WTC11 (cell line): ENCODE measurements at regions of chr20 and their contacts with region 1.

Region 1: DNA sequence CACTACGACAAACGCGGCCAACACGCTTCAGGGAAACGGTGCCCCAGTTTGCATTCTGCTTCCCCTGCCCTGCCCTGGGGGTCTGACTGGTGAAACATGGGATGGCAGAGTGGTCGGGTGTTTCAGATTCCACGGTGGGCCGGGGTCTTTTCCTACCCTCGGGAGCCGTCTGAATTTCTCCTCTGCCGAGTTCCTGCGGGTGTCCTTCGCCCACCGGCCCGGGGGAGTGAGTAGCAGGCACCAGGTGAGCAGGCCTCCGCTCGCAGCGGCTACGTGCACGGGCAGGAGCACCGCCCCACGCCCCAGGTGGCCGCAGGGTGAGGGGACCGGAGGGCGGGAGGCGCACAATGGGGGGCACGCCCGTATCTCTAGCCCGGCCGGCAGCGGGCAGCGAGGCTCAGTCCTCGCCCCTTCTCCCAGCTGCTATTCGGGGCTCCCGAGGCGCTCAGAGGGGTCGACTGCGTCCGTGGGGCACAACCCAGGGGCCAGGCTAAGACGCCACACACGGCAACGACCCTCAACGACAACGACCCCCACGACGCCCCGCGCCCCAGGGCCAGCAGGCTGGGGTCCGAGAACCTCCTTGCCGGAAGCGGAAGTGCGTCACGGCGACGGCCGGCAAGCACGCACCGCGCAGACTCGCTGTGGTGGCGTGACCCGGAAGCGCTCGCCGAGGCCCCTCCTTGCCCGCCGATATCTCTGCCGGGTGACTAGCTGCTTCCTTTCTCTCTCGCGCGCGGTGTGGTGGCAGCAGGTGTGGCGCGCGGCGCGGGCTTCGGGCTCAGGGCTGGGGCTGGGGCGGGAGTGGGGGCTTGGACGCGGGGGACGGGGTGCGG is at the start of gene RPS21:
- DNase-seq: peak; percentile 89
- ATAC-seq: peak; percentile 48
- H3K4me3 Mint-ChIP-seq: peak within 1 kb of the TSS; percentile 89
- H3K27ac Mint-ChIP-seq: peak within 1 kb of the TSS; percentile 77
- H3K4me1 Mint-ChIP-seq: peaks cover 30% of the 10 kb centered on the region
- H3K27me3 Mint-ChIP-seq: no peaks in the 10 kb centered on the region
- CTCF ChIP-seq: no peak
- total RNA-seq, gene RPS21: 2,016 to 2,119 TPM (median 2,047 TPM) in 3 replicates

Region 2: DNA sequence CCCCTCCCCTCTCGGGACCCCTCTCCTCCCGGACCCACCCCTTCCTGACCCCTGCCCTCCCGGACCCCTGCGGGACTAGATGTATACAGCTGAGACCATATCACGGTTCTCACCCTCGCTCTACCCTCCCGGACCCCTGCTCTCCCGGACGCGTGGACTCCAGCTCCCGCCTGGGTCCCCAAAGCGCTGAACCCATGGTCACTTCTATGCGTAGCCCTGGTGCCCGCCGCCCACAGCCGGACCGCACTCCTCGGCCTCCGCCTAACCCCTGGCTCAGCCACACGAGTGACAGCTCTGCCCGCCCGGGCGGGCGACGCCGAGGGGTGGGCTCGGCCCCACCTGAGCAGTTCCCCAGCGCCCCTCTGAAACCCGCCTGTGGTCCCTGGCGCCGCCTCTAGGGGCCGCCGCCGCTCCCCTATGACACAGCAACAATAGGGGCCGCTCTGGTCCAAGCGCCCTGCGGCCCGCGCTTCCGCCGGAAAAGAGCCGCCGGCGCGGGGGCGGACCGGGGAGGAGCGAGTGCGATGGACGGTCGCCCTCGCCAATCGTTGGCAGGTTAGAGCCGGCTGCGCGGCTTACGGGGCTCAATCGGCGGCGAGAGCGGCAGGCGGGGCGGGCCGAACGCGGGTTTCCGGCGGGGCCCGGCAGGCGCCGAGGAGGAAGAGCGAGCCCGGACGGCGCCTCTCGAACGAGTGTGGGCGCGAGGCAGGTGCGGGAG is 84.1 kb before region 1 on chr20 and contains the start of gene ADRM1:
- CTCF ChIA-PET with region 1: interaction called, 16 read pairs
- POLR2A ChIA-PET with region 1: interaction called, 6 read pairs
- DNase-seq: peak; percentile 98
- ATAC-seq: peak; percentile 80
- H3K4me3 Mint-ChIP-seq: peak within 1 kb of the TSS; percentile 86
- H3K27ac Mint-ChIP-seq: peak within 1 kb of the TSS; percentile 96
- H3K4me1 Mint-ChIP-seq: peaks cover 18% of the 10 kb centered on the region
- H3K27me3 Mint-ChIP-seq: no peaks in the 10 kb centered on the region
- CTCF ChIP-seq: peak; percentile 73
- total RNA-seq, gene ADRM1: 146 to 160 TPM (median 147 TPM) in 3 replicates

Region 3: DNA sequence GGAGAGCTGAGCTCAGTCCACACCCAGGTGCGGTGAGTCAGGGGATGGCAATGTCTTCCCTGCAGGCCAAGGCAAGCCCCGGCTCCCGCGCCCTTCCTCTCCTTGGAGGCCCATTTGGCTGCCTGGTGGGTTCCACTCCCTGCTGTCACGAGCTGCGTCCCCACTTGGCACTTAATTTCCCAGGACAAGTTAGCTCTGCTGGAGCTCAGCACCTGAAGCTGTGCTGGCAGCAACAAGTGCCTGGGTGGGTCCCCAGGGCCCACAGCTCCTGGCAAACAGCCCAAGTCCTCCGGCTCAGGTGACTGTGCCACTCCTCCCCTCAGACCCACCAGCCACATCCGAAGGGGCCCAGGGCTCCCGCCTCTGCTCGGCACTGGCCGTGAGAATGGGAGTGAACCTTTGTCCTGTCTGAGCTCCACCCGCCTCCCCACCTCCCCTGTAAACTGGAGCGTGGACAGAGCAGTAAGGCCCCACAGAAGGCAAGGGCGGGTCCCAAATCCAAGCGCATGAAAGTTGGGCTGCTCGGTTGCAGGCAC is 36.4 kb before region 1 on chr20:
- CTCF ChIA-PET with region 1: interaction called, 14 read pairs
- POLR2A ChIA-PET with region 1: no interaction called
- DNase-seq: no peak
- ATAC-seq: no peak
- H3K4me3 Mint-ChIP-seq: no peak overlapping the region
- H3K27ac Mint-ChIP-seq: no peak overlapping the region
- H3K4me1 Mint-ChIP-seq: peaks cover 2% of the 10 kb centered on the region; the same call in 1 of the 2 replicates
- H3K27me3 Mint-ChIP-seq: no peaks in the 10 kb centered on the region
- CTCF ChIP-seq: no peak

Region 4: GRCh38 chr20:62368976-62369814 is 17.4 kb before region 1 on chr20:
- CTCF ChIA-PET with region 1: interaction called, 137 read pairs
- POLR2A ChIA-PET with region 1: interaction called, 11 read pairs
- DNase-seq: peak; percentile 78
- ATAC-seq: peak; percentile 21
- H3K4me3 Mint-ChIP-seq: peak overlapping the region; percentile 68
- H3K27ac Mint-ChIP-seq: peak overlapping the region; percentile 59; the same call in 1 of the 2 replicates
- H3K4me1 Mint-ChIP-seq: peaks cover 30% of the 10 kb centered on the region
- H3K27me3 Mint-ChIP-seq: no peaks in the 10 kb centered on the region; the same call in 1 of the 2 replicates
- CTCF ChIP-seq: peak; percentile 47

Region 5: GRCh38 chr20:62409931-62410745 is 23.5 kb after region 1 on chr20:
- CTCF ChIA-PET with region 1: interaction called, 10 read pairs
- POLR2A ChIA-PET with region 1: no interaction called
- DNase-seq: peak; percentile 76
- ATAC-seq: peak; percentile 29
- H3K4me3 Mint-ChIP-seq: no peak overlapping the region
- H3K27ac Mint-ChIP-seq: no peak overlapping the region
- H3K4me1 Mint-ChIP-seq: peaks cover 9% of the 10 kb centered on the region
- H3K27me3 Mint-ChIP-seq: peaks cover 5% of the 10 kb centered on the region
- CTCF ChIP-seq: peak; percentile 54; the same call in 1 of the 2 replicates